G401 (cell line): ENCODE measurements at regions of chr1 and their contacts with region 1.

Region 1: GRCh38 chr1:53971718-53972117 is 25.6 kb downstream of the LRRC42 start:
- DNase-seq: no peak

Region 2: DNA sequence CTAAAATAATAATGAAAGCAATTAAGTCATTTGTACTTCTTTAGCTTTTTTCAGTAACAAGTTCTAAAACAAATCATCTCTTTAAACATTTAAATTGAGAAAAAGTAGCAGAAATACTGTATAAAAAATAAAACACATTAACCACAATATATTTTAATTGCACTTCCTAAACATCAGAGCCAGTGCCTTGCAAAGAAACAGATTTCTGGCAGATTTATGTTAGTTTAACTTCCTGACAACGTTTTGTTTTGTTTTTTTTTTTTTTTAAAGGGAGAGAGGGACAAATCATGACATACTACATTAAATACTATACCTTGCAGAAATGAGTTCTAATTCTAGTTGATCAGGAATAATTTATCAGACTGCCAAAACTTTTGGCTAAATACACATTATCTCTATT is 70.1 kb after region 1 on chr1:
- in situ Hi-C with region 1: loop called (anchors 5 kb)
- DNase-seq: no peak